ENCODE measurements at regions of chr13 and their contacts with region 1.

Region 1: DNA sequence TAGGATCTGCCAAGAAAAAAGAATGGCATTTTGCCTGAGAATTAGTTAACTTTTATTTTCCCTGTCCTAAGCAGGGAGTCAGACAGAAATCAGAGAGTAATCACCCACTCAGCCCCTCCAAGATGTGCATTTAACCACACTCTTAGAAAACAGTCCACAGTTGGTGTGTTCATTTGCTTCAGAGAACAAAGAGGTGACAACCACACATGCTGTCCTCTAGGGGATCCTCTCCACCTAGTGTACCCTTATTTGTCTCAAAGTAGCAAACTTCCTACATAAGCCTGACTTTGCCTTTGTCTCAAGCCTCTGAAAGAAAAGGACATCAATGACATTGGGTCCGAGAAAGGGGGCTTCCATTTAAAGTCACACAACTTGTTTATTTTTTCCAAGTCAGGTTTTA is 107.0 kb upstream of the RFC3 start:
- DNase-seq: no peak
- H3K4me3 ChIP-seq: no peak overlapping the region
- H3K27ac ChIP-seq: no peak overlapping the region
- H3K4me1 ChIP-seq: no peaks in the 10 kb centered on the region
- H3K27me3 ChIP-seq: no peaks in the 10 kb centered on the region
- CTCF ChIP-seq: no peak

Region 2: GRCh38 chr13:33554919-33555791 is 155.8 kb before region 1 on chr13:
- CTCF ChIA-PET with region 1: no interaction called
- dilution Hi-C with region 1: no loop called
- in situ Hi-C with region 1: loop called in 1 of 2 experiments (anchors 10 kb)
- intact Hi-C with region 1: no loop called
- DNase-seq: no peak
- H3K4me3 ChIP-seq: no peak overlapping the region
- H3K27ac ChIP-seq: no peak overlapping the region
- H3K4me1 ChIP-seq: no peaks in the 10 kb centered on the region
- H3K27me3 ChIP-seq: no peaks in the 10 kb centered on the region
- CTCF ChIP-seq: no peak

Measured in mammary epithelial cell (primary cell).